Vagina (tissue), 2 donors: ENCODE measurements at regions of chr19 and their contacts with region 1.

Region 1: DNA sequence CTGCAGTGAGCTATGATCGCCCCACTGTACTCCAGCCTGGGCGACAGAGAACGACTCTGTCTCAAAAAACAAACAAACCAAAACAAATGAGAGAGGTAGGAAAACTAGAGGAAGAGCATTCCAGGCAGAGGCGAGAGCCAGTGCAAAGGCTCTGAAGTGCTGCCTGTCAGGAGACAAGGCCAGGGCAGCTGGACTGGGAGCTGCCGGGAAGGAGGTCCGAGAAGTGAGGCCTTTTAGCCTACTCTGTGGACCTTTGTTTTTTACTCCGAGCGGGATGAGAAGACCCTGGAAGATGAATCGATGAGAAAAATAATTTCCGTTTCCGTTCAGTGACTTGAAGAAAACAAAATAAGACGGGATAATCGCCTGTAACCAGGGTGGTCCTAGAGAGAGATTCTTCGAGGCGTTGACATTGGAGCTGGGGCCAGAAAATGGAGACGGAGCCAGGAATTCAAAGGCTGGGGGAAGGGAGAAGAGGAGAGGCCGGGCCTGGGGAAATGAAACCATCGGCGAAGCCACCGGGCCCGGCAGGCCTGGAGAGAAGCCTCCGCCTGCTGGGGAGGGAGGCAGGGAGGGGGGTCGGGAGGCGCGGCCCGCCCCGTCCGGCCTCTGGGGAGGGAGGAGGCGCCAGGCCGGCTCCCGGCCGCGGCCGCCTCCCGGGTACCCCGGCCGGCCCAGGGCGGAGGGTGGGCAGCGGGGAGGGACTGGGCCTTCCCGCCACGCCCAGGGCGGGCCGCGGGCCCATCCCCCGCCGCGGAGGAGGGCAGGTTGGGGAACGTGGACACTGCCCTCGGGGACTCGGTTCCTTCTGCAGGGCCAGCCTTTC is 7.8 kb upstream of the SERTAD1 start:
- DNase-seq: no peak
- H3K4me3 ChIP-seq: peak overlapping the region; percentile 37 to 49
- H3K27ac ChIP-seq: peak overlapping the region; percentile 92
- H3K4me1 ChIP-seq: peaks cover 26% of the 10 kb centered on the region
- H3K27me3 ChIP-seq: no peaks in the 10 kb centered on the region
- CTCF ChIP-seq: no peak
- POLR2A ChIP-seq: peak in 1 of 2 donors; percentile 26

Region 2: DNA sequence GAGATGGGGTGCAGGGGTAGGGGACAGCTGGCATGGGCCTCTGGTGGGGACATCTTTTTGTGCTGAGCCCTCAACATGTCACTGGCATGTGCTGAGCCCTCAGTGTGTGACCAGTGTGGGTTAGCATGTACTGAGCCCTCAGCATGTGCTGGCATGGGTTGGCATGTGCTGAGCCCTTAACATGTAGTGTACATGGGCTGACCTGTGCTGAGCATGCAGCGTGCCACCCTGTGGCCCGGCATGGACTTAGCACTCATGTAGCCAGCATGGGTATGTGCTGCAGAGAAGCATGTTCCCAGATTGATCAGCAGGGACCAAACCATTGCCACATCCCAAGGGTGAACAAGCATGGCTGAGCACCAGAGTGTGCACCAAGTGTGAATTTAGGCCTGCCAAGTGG is 55.1 kb before region 1 on chr19:
- intact Hi-C with region 1: no loop called
- DNase-seq: no peak
- H3K4me3 ChIP-seq: no peak overlapping the region
- H3K27ac ChIP-seq: no peak overlapping the region
- H3K4me1 ChIP-seq: no peaks in the 10 kb centered on the region
- H3K27me3 ChIP-seq: no peaks in the 10 kb centered on the region
- CTCF ChIP-seq: no peak
- POLR2A ChIP-seq: no peak

Region 3: DNA sequence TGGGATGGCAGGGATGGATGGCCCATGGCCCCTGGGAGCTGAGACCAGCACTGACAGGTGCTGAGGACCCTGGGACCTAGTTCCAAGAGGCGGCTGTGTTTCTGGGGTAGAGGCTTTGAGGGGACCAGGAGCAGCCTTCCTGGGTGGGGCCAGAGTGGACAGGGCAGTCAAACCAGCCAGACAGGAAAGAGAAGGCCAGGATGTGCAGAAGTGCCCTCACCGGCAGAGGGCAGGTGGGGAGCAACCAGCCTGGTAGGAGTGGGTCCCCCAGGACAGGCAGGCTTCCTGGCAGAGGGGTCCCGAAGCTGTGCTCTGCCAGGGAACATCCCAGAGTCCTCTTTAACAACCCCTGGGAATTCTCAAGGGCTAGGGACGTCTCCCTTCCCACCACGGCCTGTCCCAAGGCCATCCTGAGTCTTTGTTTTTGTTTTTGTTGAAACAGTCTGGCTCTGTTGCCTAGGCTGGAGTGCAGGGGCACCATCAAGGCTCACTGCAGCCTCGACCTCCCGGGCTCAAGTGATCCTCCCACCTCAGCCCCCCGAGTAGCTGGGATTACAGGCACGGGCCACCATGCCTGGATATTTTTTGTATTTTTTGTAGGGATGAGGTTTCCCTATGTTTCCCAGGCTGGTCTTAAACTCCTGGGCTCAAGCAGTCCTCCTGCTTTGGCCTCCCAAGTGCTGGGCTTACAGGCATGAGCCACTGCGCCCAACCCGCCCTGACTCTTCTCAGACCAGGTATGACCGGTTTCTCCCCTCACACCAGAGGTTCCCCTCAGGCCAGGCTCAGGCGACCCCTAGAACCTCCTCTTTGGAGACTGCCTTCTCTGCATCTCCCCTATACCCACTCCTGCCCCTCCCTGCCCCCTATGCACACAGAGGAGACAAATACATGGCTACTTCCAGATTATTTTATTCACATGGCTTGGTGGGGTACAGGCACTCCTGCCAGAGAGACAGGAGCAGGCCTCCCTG is 40.4 kb before region 1 on chr19:
- intact Hi-C with region 1: no loop called
- DNase-seq: no peak
- H3K4me3 ChIP-seq: no peak overlapping the region
- H3K27ac ChIP-seq: no peak overlapping the region
- H3K4me1 ChIP-seq: peaks cover under 1% of the 10 kb centered on the region
- H3K27me3 ChIP-seq: no peaks in the 10 kb centered on the region
- CTCF ChIP-seq: no peak
- POLR2A ChIP-seq: no peak

Region 4: DNA sequence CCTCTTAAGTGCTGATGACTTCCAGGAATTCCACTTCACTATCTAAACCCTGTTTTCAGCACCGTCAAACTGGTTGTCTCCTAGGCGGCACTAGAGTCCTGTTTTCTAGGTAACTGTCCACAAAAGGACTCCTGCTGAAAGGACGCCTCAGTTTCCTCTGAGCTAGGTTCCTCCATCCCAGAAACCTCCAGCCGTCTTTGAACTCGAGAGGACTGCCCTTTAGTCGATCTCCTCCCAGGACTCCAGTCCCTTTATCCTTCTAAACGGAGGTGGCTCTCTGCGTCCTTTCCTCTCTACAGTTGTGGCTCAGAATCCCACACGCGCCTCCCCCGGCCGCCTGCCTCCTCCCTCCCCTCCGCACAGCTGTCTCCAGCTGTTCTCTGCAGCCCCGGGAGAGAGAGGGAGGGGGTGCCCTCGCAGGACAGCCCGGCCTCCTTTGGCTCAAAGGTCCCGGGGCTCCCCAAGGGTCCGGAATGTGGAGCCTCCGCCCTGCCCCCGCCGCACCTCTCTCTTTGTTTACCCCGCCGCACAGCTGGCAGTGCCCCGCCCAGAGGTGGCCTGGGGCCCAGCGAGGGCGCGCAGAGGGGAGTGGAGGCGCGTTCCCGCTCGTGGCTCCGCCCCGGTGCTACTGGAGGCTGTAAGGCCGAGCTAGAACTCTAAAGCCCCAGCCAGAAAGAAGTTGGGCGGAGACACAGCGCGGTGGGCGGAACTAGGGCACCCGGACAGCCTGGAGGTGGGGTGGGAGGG is 170.0 kb after region 1 on chr19:
- intact Hi-C with region 1: loop called (anchors 10 kb)
- DNase-seq: peak in 1 of 2 donors; percentile 99
- H3K4me3 ChIP-seq: peak overlapping the region; percentile 69 to 78
- H3K27ac ChIP-seq: peak overlapping the region; percentile 97
- H3K4me1 ChIP-seq: peaks cover 87% of the 10 kb centered on the region
- H3K27me3 ChIP-seq: no peaks in the 10 kb centered on the region
- CTCF ChIP-seq: no peak
- POLR2A ChIP-seq: peak in 1 of 2 donors; percentile 65